A549 (cell line): ENCODE measurements at regions of chr11 and their contacts with region 1.

Region 1: DNA sequence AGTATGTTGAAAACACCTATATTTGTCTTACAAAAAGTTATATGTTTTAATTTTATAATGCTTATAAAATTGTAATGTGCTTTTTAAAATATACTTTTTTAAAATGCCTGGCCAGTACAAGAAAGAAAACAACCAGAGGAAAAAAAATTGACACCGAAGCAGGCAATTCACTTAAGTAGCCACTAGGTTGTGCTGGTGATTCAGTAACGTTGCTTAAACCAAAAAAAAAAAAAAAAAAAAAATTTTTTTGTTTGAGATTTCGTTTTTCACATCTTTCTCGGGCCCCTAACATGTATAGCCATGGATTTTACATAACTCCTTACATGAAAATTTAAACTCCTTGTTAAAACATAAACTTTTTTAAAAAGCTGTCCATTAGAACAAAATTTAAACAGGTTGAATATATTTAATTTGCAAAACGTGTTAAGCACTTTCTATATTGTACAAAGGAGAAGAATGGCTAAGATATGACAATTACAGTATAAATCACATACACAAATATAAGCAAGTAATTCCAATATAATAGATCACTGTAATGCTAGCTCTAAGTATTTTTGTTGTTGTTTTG is 9.2 kb downstream of the OR8B4 start:
- DNase-seq: peak; percentile 10 to 56
- ATAC-seq: no peak
- H3K4me3 ChIP-seq: no peak overlapping the region
- H3K27ac ChIP-seq: no peak overlapping the region
- H3K4me1 ChIP-seq: no peaks in the 10 kb centered on the region
- CTCF ChIP-seq: peak; percentile 56
- EP300 ChIP-seq: no peak
- POLR2A ChIP-seq: no peak
- RAD21 ChIP-seq: peak; percentile 57 to 61; a peak in 4 of 5 replicates

Region 2: GRCh38 chr11:124402326-124402922 is 13.0 kb before region 1 on chr11:
- CTCF ChIA-PET with region 1: interaction called, 19 read pairs
- POLR2A ChIA-PET with region 1: no interaction called
- DNase-seq: peak; percentile 18 to 70
- ATAC-seq: peak; percentile 85 to 95
- H3K4me3 ChIP-seq: no peak overlapping the region
- H3K27ac ChIP-seq: no peak overlapping the region
- H3K4me1 ChIP-seq: no peaks in the 10 kb centered on the region
- CTCF ChIP-seq: peak; percentile 63
- EP300 ChIP-seq: no peak
- POLR2A ChIP-seq: no peak
- RAD21 ChIP-seq: peak; percentile 48 to 62; a peak in 4 of 5 replicates

Region 3: DNA sequence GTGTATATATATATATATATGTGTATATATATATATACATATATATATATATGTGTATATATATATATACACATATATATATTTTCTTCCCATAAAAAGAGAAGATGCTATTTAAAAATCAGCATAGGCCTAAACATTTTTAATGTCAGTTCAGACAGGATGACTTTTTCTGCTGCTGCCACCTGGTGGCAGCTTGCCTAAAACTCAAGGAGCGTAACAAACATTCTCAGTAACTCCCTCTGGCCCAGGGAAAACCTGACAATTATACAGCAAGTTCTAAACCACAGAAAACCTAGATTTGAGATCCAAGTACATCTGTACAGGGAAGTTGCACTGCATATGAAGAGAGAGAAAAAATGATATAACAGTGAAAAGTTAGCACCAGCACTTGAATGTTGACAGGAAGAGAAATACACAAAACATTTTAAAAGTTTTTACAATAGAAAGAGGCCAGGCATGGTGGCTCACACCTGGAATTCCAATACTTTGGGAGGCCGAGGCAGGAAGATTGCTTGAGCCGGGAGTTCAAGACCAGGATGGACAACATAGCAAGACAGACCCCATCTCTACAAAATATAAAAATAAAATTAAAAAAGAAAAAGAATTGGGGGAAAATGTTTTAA is 170.9 kb after region 1 on chr11:
- CTCF ChIA-PET with region 1: interaction called, 12 read pairs
- POLR2A ChIA-PET with region 1: interaction called, 3 read pairs
- DNase-seq: peak; percentile 2 to 50
- ATAC-seq: peak in 1 of 2 experiments; percentile 70; a peak in 3 of 6 replicates
- H3K4me3 ChIP-seq: no peak overlapping the region
- H3K27ac ChIP-seq: no peak overlapping the region
- H3K4me1 ChIP-seq: no peaks in the 10 kb centered on the region
- CTCF ChIP-seq: peak; percentile 44
- EP300 ChIP-seq: no peak
- POLR2A ChIP-seq: no peak
- RAD21 ChIP-seq: peak; percentile 35 to 54; a peak in 4 of 5 replicates